ENCODE measurements at regions of chr16 and their contacts with region 1.

Region 1: GRCh38 chr16:57513371-57514102 is 22.8 kb downstream of the CCDC102A start:
- DNase-seq: no peak
- H3K4me3 ChIP-seq: no peak overlapping the region
- H3K27ac ChIP-seq: no peak overlapping the region
- H3K4me1 ChIP-seq: no peaks in the 10 kb centered on the region
- H3K27me3 ChIP-seq: no peaks in the 10 kb centered on the region

Region 2: GRCh38 chr16:57475711-57476339 is 37.7 kb before region 1 on chr16:
- CTCF ChIA-PET with region 1: interaction called, 134 read pairs
- POLR2A ChIA-PET with region 1: interaction called, 3 read pairs
- DNase-seq: peak; percentile 96 to 99 (median 98)
- H3K4me3 ChIP-seq: peak overlapping the region in 2 of 7 experiments; percentile 20 to 49
- H3K27ac ChIP-seq: no peak overlapping the region
- H3K4me1 ChIP-seq: peaks cover 0 to 77% (median 75%) of the 10 kb centered on the region in 4 experiments
- H3K27me3 ChIP-seq: no peaks in the 10 kb centered on the region

Region 3: DNA sequence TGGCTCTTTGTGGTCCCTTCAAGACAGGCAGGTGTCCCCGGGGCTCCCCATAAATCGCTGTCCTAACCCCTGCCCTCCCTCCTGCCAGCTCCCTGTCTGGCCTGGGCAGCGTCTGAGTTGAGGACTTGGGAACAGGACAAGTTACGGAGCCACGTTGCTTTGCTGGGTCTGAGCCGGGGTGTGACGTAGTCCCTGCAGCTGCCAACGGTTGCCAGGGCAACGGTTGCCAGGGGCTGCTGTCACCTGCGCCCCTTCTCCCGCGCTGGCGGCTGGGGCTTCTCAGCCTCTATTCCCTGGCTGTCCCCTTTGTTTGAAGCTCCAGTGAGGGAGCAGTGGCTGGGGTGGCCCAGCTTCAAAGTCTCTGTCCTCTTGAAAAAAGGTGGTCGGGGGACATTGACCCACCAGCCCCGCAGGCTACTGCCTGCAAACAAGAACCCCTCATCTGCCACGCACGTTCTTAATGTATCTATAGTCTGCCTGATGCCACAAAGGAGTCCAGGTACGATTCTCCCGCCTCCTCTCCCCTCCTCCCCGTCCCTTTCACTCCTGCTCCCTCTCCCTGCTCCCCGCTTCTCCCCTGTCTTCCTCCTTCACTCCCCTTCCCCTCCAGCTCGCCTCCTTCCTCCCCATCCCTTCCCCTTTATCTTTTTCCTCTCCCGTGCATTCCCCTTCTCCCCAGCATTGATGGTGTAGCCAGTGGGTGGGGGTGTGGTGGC is 125.8 kb after region 1 on chr16:
- CTCF ChIA-PET with region 1: no interaction called
- POLR2A ChIA-PET with region 1: no interaction called
- DNase-seq: peak; percentile 51 to 74 (median 70)
- H3K4me3 ChIP-seq: no peak overlapping the region
- H3K27ac ChIP-seq: peak overlapping the region; percentile 13 to 66
- H3K4me1 ChIP-seq: peaks cover 2 to 89% (median 82%) of the 10 kb centered on the region in 4 experiments
- H3K27me3 ChIP-seq: no peaks in the 10 kb centered on the region

Region 4: GRCh38 chr16:57826706-57827625 is 313.4 kb after region 1 on chr16:
- CTCF ChIA-PET with region 1: no interaction called
- POLR2A ChIA-PET with region 1: no interaction called
- DNase-seq: no peak
- H3K4me3 ChIP-seq: no peak overlapping the region
- H3K27ac ChIP-seq: no peak overlapping the region
- H3K4me1 ChIP-seq: no peaks in the 10 kb centered on the region
- H3K27me3 ChIP-seq: peaks cover 0 to 3% (median 0%) of the 10 kb centered on the region in 5 experiments

Measured in common myeloid progenitor, CD34-positive (primary cell).